Vagina (tissue), 2 donors: ENCODE measurements at regions of chr1 and their contacts with region 1.

Region 1: GRCh38 chr1:29033829-29034466 is 89.8 kb downstream of the TMEM200B start:
- DNase-seq: no peak
- H3K4me3 ChIP-seq: no peak overlapping the region
- H3K27ac ChIP-seq: no peak overlapping the region
- H3K4me1 ChIP-seq: no peaks in the 10 kb centered on the region
- H3K27me3 ChIP-seq: no peaks in the 10 kb centered on the region
- CTCF ChIP-seq: peak; percentile 54 to 76 (median 57)
- POLR2A ChIP-seq: no peak

Region 2: DNA sequence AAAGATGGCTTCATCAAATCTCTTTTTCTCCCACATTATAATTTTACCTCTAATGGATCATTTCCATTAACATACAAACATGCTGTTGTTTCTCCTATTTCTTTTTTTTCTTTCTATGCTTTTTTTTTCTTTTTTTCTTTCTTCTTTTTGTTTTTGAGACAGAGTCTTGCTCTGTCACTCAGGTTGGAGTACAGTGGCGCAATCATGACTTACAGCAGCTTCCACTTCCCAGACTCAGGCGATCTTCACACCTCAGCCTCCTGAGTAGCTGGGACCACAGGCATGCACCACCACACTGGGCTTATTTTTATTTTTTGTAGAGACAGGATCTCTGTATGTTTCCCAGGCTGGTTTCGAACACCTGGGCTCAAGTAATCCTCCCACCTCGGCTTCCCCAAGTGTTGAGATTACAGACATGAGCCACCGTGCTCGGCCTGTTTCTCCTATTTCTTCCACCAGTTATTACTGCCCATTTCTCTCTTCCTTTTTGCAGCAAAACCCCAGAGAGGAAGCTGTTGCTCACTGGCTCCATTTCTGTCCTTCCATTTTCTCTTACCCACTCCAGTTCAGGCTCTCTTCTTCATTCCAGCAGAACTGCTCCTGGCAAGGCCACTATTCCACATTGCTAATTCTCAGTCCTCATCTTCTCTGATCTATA is 254.1 kb before region 1 on chr1:
- intact Hi-C with region 1: loop called (anchors 10 kb)
- DNase-seq: no peak
- H3K4me3 ChIP-seq: no peak overlapping the region
- H3K27ac ChIP-seq: no peak overlapping the region
- H3K4me1 ChIP-seq: peaks cover 9% of the 10 kb centered on the region
- H3K27me3 ChIP-seq: no peaks in the 10 kb centered on the region
- CTCF ChIP-seq: no peak
- POLR2A ChIP-seq: no peak